ENCODE measurements at regions of chr17 and their contacts with region 1.

Region 1: DNA sequence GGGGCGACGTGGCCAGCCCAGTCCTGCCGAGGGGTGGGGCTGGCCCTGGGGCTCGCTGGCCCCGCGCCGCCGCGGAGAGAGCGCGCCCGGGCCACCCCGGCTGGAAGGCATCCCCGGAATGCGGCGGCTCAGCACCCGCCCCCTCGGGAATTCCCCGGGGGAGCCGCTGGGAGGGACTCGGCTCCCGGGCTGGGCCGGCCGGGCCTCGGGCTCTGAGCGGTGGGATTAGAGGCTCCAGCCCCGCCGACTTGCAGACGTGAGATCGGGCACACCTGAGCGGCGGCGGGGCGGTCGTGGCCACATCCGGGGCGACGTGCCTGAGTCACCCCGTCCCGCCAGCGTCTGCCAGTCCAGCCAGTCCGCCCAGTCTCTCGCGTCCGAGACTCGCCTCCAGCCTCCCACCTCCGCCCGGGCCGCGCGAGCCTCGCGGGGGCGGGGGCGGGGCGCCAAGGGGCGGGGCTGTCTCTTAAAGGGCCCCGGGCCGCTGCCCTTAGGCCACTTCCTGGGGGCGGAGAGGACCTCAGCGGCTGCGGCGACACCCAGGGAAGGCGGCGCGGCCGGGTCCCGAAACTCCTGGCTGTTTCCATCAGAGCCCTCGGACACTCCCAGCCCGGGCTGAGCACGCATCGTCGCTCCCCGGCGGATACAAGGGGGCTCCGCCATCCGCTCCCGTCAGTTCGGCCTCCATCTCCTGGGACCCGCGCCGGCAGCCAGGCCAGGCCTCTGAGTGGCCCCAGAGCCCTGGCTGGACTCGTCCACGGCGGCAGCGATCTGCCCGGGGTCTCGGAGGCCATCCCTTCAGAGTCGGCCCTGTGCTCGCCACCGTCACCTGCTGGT is at the start of gene KCTD11:
- DNase-seq: peak; percentile 69 to 97
- H3K4me3 ChIP-seq: peak within 1 kb of the TSS; percentile 71 to 98
- H3K27ac ChIP-seq: peak within 1 kb of the TSS; percentile 96 to 100
- H3K4me1 ChIP-seq: peaks cover 11 to 36% of the 10 kb centered on the region in 2 donors
- H3K27me3 ChIP-seq: no peaks in the 10 kb centered on the region
- CTCF ChIP-seq: peak in 2 of 3 experiments; percentile 57 to 59
- total RNA-seq, gene KCTD11: 14.6 TPM

Region 2: DNA sequence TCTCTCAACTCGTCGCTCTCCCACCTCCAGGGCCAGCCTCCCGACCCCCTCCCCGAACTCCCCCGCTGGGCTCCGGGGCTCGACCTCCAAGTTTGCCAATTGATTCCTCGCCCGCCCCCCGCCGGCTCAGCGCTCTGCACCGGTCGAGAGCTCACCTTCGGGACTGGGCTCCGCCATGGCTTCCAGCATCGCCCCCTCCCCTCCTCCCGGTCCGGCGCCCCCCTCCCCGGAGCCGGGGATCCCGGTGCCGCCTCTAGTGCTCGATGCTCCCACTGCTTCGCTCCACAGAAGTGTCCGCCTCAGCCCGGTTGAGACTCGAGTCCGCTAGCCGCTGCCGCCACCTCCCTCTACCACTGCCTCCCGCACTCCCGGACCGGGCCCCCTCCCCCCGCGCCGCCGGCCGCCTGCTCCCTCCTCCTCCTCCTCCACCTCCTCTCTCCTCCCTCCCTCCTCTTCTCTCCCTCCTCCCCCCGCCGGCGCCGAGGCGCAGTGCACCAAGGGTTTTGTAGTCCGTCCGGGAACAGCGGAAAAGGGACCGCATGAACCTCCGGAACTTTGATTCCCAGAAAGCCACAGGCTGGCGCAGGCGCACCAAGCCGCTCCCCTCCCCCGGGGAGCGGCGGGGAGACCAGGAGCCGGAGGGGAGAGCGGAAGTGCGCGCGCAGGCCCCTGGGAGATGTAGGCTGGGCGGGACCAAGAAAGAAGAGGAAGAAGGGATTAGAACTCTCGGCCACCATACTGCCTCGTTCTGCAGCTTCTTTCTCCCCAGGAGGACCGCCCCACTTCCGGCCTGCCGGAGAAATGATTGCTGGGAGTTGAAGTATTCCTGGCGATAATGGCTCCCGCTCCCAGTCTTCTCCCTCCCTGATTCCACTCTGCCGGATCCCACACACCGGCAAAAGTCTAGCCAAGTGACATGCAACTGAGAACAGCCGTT is 112.5 kb before region 1 on chr17 and contains the start of gene PHF23:
- intact Hi-C with region 1: loop called (anchors 5 kb)
- DNase-seq: peak; percentile 99 to 100
- H3K4me3 ChIP-seq: peak within 1 kb of the TSS; percentile 92 to 99
- H3K27ac ChIP-seq: peak within 1 kb of the TSS; percentile 88 to 96
- H3K4me1 ChIP-seq: peaks cover 12 to 25% of the 10 kb centered on the region in 2 donors
- H3K27me3 ChIP-seq: no peaks in the 10 kb centered on the region
- CTCF ChIP-seq: peak in 1 of 3 experiments; percentile 37
- total RNA-seq, gene PHF23: 13.3 TPM

Region 3: GRCh38 chr17:7329374-7329996 is 22.4 kb before region 1 on chr17:
- intact Hi-C with region 1: loop called (anchors 1 kb)
- DNase-seq: peak; percentile 98 to 99
- H3K4me3 ChIP-seq: peak overlapping the region; percentile 89 to 97
- H3K27ac ChIP-seq: peak overlapping the region; percentile 89 to 92
- H3K4me1 ChIP-seq: peaks cover 0 to 12% of the 10 kb centered on the region in 2 donors
- H3K27me3 ChIP-seq: no peaks in the 10 kb centered on the region
- CTCF ChIP-seq: no peak

Region 4: DNA sequence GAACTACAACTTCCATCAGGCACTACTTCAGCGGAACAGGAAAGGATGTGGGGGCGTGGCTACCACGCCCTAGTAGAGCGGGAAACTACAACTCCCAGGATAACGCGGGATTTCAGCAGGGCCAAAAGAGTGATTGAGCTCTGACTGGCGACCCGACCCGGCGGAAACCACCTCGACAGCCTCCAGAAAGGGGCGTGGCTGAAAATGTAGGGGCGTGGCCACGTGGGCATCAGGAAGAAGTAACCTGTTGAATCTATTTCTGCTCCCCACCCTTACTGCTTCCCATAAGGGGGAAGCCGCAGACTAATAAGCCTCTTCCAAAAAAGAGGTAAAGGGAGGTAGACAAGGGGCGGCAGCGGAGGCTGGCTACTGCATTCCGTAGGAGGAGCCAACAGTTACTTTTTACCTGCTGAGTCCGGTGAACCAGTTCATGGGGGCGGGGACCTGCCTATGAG is 83.4 kb after region 1 on chr17 and contains the start of gene TMEM102:
- intact Hi-C with region 1: loop called (anchors 1 kb)
- DNase-seq: peak; percentile 92 to 98
- H3K4me3 ChIP-seq: peak within 1 kb of the TSS; percentile 59 to 69
- H3K27ac ChIP-seq: peak within 1 kb of the TSS; percentile 45 to 52
- H3K4me1 ChIP-seq: peaks cover 14 to 30% of the 10 kb centered on the region in 2 donors
- H3K27me3 ChIP-seq: peaks cover 14% of the 10 kb centered on the region
- CTCF ChIP-seq: no peak
- total RNA-seq, gene TMEM102: 20.4 TPM

Region 5: GRCh38 chr17:7561028-7561575 is 209.2 kb after region 1 on chr17:
- intact Hi-C with region 1: loop called (anchors 1 kb)
- DNase-seq: peak; percentile 57 to 94
- H3K4me3 ChIP-seq: peak overlapping the region; percentile 67 to 92
- H3K27ac ChIP-seq: peak overlapping the region; percentile 90 to 97
- H3K4me1 ChIP-seq: peaks cover 39 to 56% of the 10 kb centered on the region in 2 donors
- H3K27me3 ChIP-seq: no peaks in the 10 kb centered on the region
- CTCF ChIP-seq: peak; percentile 84 to 96 (median 84)

Region 6: DNA sequence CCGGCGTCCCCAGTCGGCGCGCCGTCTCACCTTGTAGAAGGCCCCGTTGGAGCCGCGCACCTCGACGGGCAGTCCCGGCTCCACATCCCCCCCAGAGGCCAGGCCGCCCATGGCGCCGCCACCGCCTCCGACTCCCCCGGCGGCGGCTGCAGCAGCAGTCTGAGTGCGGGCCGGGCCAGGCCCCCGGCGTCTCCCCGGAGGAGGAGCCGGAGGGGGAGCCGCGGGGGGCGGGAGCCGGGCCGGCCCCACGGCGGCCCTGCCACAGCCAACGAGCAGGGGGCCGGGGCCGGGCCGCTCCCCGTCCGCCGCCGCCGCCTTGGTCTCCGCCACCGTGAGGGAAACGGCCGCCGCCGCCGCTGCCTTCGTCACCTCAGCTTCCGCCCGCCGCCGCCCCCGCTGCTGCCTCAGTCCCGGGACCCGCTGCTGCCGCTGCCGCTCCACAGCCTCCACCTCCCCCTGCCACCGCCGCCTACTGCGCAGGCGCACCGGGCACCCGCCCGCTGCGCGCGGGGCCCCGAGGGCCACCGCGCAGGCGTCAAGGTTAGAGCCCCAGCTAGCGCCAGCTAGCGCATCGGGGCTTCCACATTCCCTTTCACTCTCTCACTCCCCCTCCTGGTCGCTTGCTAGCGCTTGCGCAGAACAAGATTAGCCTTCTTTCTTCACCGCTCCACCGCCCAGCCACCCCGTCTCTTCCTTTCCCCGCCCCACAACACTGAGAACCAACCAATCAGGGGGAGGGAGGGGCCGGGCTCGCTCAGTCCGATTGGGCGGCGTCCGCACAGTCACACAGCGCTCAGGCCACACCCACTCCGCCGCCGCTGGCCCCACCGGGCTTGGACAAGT is 262.8 kb after region 1 on chr17 and contains the start of gene FXR2:
- intact Hi-C with region 1: loop called (anchors 2 kb)
- DNase-seq: peak; percentile 98 to 100
- H3K4me3 ChIP-seq: peak within 1 kb of the TSS; percentile 91 to 97
- H3K27ac ChIP-seq: peak within 1 kb of the TSS; percentile 85 to 89
- H3K4me1 ChIP-seq: peaks cover 0 to 26% of the 10 kb centered on the region in 2 donors
- H3K27me3 ChIP-seq: no peaks in the 10 kb centered on the region
- CTCF ChIP-seq: peak; percentile 61 to 67 (median 62)
- total RNA-seq, gene FXR2: 19.3 TPM